A549 (cell line): ENCODE measurements at regions of chr5 and their contacts with region 1.

Region 1: DNA sequence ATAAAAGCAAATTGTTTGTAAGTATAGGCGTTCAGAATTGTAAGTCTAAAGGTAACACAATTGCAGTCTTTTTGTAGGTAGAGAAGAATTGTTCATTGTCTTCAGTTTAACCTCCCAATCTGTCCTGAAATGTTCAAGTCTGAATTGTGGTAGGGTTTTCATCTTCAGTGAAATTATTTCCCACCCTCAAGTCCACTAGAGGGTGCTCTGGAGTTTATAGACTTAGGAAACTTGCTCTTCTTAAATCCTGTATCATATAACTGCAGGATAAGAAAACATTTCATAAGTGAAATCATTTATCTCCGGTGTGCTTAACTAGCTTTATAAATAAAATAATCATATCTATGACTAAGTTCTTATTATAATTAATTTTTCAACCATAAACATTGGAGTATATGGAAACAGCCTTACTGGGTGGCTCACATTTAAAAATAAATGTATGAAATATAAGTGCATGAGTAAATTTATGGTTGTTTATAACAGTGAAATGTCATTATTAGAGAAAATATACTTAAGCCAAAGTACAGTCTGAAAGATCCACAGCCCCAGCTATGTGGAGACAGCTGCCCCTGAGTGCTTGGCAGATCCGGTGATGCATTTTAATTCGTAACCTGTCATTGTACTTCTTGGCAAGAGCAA is 182.4 kb upstream of the OTULINL start:
- DNase-seq: peak; percentile 48 to 53
- ATAC-seq: peak in 1 of 2 experiments; percentile 76; a peak in 3 of 6 replicates
- H3K4me3 ChIP-seq: no peak overlapping the region
- H3K27ac ChIP-seq: peak overlapping the region in 1 of 2 experiments; percentile 47; a peak in 1 of 6 replicates
- H3K4me1 ChIP-seq: peaks cover 14% of the 10 kb centered on the region
- CTCF ChIP-seq: peak; percentile 75
- EP300 ChIP-seq: no peak
- POLR2A ChIP-seq: no peak
- RAD21 ChIP-seq: peak; percentile 35 to 48; a peak in 3 of 5 replicates

Region 2: DNA sequence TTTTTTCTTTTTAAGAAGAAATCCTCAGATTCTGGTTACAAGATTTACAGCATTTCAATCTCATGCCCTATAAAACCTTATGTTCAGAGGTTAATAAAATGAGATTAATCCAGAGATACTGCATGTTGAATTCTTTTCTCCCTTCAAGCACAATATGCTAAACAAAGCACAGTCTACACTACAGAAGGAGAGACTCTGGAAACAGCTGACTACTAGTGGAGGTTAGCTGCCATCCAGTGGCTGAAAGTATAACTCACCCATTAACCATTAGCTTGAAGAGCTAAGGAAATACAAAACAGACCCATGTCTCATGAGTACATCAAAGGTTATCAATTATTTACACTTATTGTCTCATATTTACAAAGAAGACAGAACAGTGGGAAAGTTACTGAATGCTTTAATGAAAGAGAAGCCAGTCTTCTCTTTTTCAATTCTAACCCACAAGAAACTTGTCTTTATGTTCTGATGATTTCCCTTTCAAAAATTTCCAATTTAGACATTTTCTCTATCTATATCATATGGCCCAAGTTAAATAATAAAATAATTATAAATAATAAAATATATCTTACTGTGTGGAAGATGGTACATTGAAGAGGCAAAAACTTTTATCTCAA is 442.0 kb before region 1 on chr5:
- CTCF ChIA-PET with region 1: no interaction called
- POLR2A ChIA-PET with region 1: no interaction called
- DNase-seq: peak; percentile 44 to 68
- ATAC-seq: peak; percentile 98 to 99
- H3K4me3 ChIP-seq: no peak overlapping the region
- H3K27ac ChIP-seq: no peak overlapping the region
- H3K4me1 ChIP-seq: no peaks in the 10 kb centered on the region
- CTCF ChIP-seq: peak; percentile 79
- EP300 ChIP-seq: no peak
- POLR2A ChIP-seq: no peak
- RAD21 ChIP-seq: peak; percentile 83 to 91

Region 3: DNA sequence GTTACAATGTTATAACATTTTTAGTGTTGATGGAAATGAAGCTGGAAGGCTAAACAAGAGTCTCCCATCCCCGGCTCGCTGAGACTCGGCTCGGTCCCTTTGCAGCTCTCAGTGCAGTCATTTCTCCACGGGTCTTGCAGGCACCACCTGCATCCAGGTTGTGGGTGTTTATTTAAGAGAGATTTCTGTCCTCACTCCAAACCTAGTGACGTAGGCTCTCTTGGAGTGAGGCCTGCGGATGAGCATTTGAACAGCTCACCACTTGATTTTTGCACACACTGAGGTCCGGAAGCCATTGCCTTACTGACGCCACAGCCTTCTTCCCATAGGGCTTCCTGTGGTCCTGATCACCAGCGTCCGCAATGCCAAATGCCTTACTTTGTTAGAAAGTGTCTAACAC is 15.2 kb before region 1 on chr5:
- CTCF ChIA-PET with region 1: interaction called, 11 read pairs
- POLR2A ChIA-PET with region 1: no interaction called
- DNase-seq: no peak
- ATAC-seq: no peak
- H3K4me3 ChIP-seq: no peak overlapping the region
- H3K27ac ChIP-seq: no peak overlapping the region
- H3K4me1 ChIP-seq: no peaks in the 10 kb centered on the region
- CTCF ChIP-seq: no peak
- EP300 ChIP-seq: no peak
- POLR2A ChIP-seq: no peak
- RAD21 ChIP-seq: no peak

Region 4: DNA sequence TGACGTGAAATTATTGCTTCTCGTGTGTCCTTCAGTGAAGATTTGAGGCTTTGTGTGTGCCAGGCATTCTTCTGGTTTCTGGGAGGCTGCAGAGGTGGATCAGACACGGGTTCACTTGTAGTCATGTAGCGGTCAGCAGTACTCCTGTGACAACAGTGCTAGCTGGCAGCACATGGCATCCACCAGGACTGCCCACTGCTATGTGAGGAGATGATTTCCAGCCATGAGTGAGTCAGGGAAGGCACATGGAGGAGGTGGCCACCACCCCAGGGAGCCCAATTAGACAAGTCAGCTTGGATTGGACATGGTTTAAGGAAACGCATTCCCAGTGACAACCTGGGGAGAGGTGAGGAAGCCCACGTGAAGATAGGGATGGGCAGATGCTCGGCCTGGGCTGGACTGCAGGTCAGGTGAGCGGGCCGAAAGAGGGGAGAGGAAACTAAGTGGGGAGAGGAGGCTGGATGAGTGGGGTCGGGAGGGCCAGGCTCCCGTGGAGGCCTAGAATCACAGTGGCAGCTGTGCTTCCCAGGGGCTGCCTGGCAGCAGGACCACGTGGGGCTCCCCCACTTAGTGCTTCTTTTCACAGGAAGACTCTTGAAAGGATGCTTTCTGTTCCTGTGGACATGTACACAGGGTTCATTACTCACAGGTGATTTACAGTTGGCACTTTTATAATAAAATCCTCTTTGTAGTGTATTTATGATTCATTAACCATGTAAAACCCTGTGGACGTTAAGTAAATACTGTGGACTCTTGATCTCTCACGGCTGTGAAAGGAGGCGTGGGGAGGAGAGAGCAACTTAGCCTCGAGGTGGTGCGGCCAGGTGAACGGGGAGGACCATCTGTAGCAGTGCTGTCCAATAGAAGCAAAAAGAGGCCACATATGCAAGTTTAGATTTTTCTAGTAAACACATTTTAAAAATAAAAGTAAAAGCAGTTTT is 102.5 kb after region 1 on chr5:
- CTCF ChIA-PET with region 1: no interaction called
- POLR2A ChIA-PET with region 1: no interaction called
- DNase-seq: no peak
- ATAC-seq: no peak
- H3K4me3 ChIP-seq: no peak overlapping the region
- H3K27ac ChIP-seq: no peak overlapping the region
- H3K4me1 ChIP-seq: no peaks in the 10 kb centered on the region
- CTCF ChIP-seq: no peak
- EP300 ChIP-seq: no peak
- POLR2A ChIP-seq: no peak
- RAD21 ChIP-seq: no peak

Region 5: GRCh38 chr5:14534773-14535172 is 135.6 kb after region 1 on chr5:
- CTCF ChIA-PET with region 1: no interaction called
- POLR2A ChIA-PET with region 1: no interaction called
- DNase-seq: no peak
- ATAC-seq: no peak
- H3K4me3 ChIP-seq: no peak overlapping the region
- H3K27ac ChIP-seq: no peak overlapping the region
- H3K4me1 ChIP-seq: no peaks in the 10 kb centered on the region
- CTCF ChIP-seq: no peak
- EP300 ChIP-seq: no peak
- POLR2A ChIP-seq: no peak
- RAD21 ChIP-seq: no peak